Mammary epithelial cell (primary cell): ENCODE measurements at regions of chr5 and their contacts with region 1.

Region 1: GRCh38 chr5:112146323-112147226 is 272.5 kb downstream of the EPB41L4A start:
- DNase-seq: peak; percentile 59
- H3K4me3 ChIP-seq: no peak overlapping the region
- H3K27ac ChIP-seq: no peak overlapping the region
- H3K4me1 ChIP-seq: peaks cover 16% of the 10 kb centered on the region
- H3K27me3 ChIP-seq: no peaks in the 10 kb centered on the region
- CTCF ChIP-seq: peak; percentile 74 to 80

Region 2: DNA sequence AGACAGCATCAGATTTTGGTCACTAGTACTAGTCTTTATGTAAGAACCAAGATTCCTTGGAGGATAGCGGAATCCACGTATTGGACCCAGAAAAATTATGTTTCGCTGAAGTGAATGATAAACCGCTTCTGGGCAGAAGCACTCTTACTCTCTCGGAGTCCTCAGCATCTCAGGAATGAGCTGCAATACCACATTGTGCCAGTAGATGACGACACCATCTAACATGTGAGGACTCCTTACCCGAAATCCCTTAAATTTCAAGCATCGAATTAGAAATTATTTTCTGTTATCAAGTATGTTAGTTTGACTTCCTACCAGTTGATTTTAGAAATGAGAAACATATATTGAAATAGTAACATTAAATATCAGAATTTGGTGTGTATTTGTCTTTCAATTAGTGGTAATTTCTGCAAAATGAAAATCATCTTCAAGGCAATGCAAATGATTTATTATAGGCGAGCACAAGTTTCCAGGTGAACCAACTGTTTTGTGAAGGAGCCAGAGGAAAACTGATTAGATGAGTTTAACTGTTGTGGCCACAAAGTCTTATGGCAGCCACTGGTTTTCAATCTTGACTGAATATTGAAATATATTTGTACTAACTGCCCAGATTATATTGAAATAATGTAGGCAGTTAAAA is 988.4 kb before region 1 on chr5:
- CTCF ChIA-PET with region 1: no interaction called
- dilution Hi-C with region 1: no loop called
- in situ Hi-C with region 1: loop called (anchors 25 kb)
- intact Hi-C with region 1: loop called (anchors 1 kb)
- DNase-seq: peak; percentile 65
- H3K4me3 ChIP-seq: no peak overlapping the region
- H3K27ac ChIP-seq: no peak overlapping the region
- H3K4me1 ChIP-seq: no peaks in the 10 kb centered on the region
- H3K27me3 ChIP-seq: no peaks in the 10 kb centered on the region
- CTCF ChIP-seq: peak; percentile 100

Region 3: DNA sequence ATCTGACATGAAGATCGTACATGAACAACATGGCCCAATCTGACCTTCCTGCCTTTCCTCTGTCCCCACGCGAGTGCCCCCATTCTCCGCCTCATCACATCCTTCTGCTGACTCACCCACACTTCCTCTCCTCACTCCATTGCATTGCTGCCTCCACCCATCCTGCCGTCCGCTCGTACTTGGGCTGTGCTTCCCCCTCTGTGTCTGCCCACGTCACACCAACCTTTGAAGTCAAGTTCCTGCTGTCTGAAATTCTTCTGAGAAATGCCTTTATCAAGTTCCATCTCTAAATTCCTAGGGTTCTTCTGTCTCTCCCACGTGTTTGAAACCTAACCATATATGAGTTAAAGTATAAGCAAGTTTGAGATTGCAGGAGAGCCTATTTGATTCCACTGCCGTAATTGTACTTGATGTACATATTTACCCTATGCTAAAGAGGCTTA is 616.3 kb before region 1 on chr5:
- CTCF ChIA-PET with region 1: no interaction called
- dilution Hi-C with region 1: no loop called
- in situ Hi-C with region 1: no loop called
- intact Hi-C with region 1: loop called (anchors 1 kb)
- DNase-seq: peak; percentile 40
- H3K4me3 ChIP-seq: no peak overlapping the region
- H3K27ac ChIP-seq: no peak overlapping the region
- H3K4me1 ChIP-seq: peaks cover 8% of the 10 kb centered on the region
- H3K27me3 ChIP-seq: no peaks in the 10 kb centered on the region
- CTCF ChIP-seq: no peak

Region 4: GRCh38 chr5:111618623-111619271 is 527.8 kb before region 1 on chr5:
- CTCF ChIA-PET with region 1: no interaction called
- dilution Hi-C with region 1: no loop called
- in situ Hi-C with region 1: no loop called
- intact Hi-C with region 1: loop called (anchors 2 kb)
- DNase-seq: peak; percentile 72
- H3K4me3 ChIP-seq: no peak overlapping the region
- H3K27ac ChIP-seq: no peak overlapping the region
- H3K4me1 ChIP-seq: no peaks in the 10 kb centered on the region
- H3K27me3 ChIP-seq: no peaks in the 10 kb centered on the region
- CTCF ChIP-seq: no peak

Region 5: GRCh38 chr5:111685971-111686370 is 460.6 kb before region 1 on chr5:
- CTCF ChIA-PET with region 1: no interaction called
- dilution Hi-C with region 1: no loop called
- in situ Hi-C with region 1: loop called in 1 of 2 experiments (anchors 10 kb)
- intact Hi-C with region 1: loop called (anchors 1 kb)
- DNase-seq: no peak
- H3K4me3 ChIP-seq: no peak overlapping the region
- H3K27ac ChIP-seq: no peak overlapping the region
- H3K4me1 ChIP-seq: peaks cover 9% of the 10 kb centered on the region
- H3K27me3 ChIP-seq: no peaks in the 10 kb centered on the region
- CTCF ChIP-seq: peak; percentile 32 to 34

Region 6: DNA sequence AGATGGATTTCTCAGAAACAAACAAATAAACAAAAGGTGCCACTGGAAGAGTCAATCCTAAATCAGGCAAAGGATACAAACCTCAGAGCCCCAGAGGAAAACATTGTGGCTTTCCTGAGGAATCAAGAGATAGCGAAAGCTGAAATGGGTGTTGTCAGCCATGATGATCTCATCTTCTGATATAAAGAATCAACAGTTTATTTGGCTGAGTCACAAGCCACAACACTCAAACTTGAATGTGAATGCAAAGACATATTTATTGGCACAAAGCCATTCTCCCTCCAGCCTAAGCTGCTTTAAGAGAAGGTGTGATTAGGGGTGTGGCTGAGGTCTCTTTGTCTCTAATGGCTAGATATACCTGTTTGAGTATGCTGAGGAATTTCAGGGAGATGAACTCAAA is 316.2 kb before region 1 on chr5:
- CTCF ChIA-PET with region 1: no interaction called
- dilution Hi-C with region 1: no loop called
- in situ Hi-C with region 1: loop called in 1 of 2 experiments (anchors 10 kb)
- intact Hi-C with region 1: loop called (anchors 1 kb)
- DNase-seq: peak; percentile 94
- H3K4me3 ChIP-seq: no peak overlapping the region
- H3K27ac ChIP-seq: peak overlapping the region; percentile 18
- H3K4me1 ChIP-seq: peaks cover 7% of the 10 kb centered on the region
- H3K27me3 ChIP-seq: peaks cover 13% of the 10 kb centered on the region
- CTCF ChIP-seq: no peak

Region 7: GRCh38 chr5:111929867-111930266 is 216.7 kb before region 1 on chr5:
- CTCF ChIA-PET with region 1: no interaction called
- dilution Hi-C with region 1: no loop called
- in situ Hi-C with region 1: no loop called
- intact Hi-C with region 1: no loop called
- DNase-seq: peak; percentile 93
- H3K4me3 ChIP-seq: no peak overlapping the region
- H3K27ac ChIP-seq: peak overlapping the region; percentile 52
- H3K4me1 ChIP-seq: peaks cover 23% of the 10 kb centered on the region
- H3K27me3 ChIP-seq: no peaks in the 10 kb centered on the region
- CTCF ChIP-seq: no peak

Region 8: GRCh38 chr5:111997711-111998110 is 148.9 kb before region 1 on chr5:
- CTCF ChIA-PET with region 1: no interaction called
- dilution Hi-C with region 1: no loop called
- in situ Hi-C with region 1: no loop called
- intact Hi-C with region 1: loop called (anchors 5 kb)
- DNase-seq: peak; percentile 99
- H3K4me3 ChIP-seq: no peak overlapping the region
- H3K27ac ChIP-seq: peak overlapping the region; percentile 2
- H3K4me1 ChIP-seq: peaks cover 23% of the 10 kb centered on the region
- H3K27me3 ChIP-seq: no peaks in the 10 kb centered on the region
- CTCF ChIP-seq: no peak

Region 9: DNA sequence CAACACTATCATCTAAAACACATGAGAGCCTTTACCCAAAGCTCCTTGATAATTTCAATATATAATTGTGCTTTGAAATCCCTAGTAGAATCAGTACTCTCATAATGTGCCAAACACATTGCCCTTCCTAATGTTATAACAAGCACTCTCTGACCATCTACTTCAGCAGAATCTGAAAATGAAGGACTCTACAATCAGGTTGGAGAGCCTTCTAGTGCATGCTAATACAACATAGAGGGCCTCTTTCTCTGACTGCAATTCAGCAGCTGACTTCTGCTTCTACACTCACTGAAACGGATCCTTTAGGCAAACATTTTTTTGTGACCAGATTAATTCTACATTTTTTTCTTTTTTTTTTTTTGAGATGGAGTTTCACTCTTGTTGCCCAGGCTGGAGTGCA is 116.9 kb after region 1 on chr5:
- CTCF ChIA-PET with region 1: no interaction called
- dilution Hi-C with region 1: no loop called
- in situ Hi-C with region 1: no loop called
- intact Hi-C with region 1: no loop called
- DNase-seq: no peak
- H3K4me3 ChIP-seq: no peak overlapping the region
- H3K27ac ChIP-seq: no peak overlapping the region
- H3K4me1 ChIP-seq: no peaks in the 10 kb centered on the region
- H3K27me3 ChIP-seq: peaks cover 12% of the 10 kb centered on the region
- CTCF ChIP-seq: no peak